ENCODE measurements at regions of chr1 and their contacts with region 1.

Region 1: GRCh38 chr1:155167166-155168104 is 5.7 kb downstream of the KRTCAP2 start:
- DNase-seq: peak; percentile 92
- H3K4me3 Mint-ChIP-seq: peak overlapping the region; percentile 49
- H3K27ac Mint-ChIP-seq: no peak overlapping the region
- H3K4me1 Mint-ChIP-seq: peaks cover 19% of the 10 kb centered on the region
- H3K27me3 Mint-ChIP-seq: no peaks in the 10 kb centered on the region

Region 2: GRCh38 chr1:154062309-154062708 is 1105.1 kb before region 1 on chr1:
- CTCF ChIA-PET with region 1: no interaction called
- POLR2A ChIA-PET with region 1: no interaction called
- intact Hi-C with region 1: no loop called
- DNase-seq: no peak
- H3K4me3 Mint-ChIP-seq: no peak overlapping the region
- H3K27ac Mint-ChIP-seq: no peak overlapping the region
- H3K4me1 Mint-ChIP-seq: no peaks in the 10 kb centered on the region
- H3K27me3 Mint-ChIP-seq: peaks cover 2% of the 10 kb centered on the region

Region 3: DNA sequence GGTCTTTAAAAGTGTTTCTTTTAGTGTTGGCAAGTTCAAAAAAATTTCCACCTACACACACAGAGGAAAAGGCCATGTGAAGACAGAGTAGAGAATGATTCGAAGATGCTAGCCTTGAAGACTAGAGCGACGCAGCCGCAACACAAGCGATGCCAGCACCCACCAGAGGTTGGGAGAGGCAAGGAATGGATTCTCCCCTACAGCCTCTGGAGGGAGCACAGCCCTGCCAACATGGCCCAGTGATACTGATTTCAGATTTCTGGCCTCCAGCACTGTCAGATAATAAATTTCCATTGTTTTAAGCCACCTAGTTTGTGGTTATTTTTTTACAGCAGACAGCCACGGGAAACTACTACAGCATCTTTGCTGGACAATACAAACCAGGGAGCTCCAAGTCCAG is 552.5 kb before region 1 on chr1:
- CTCF ChIA-PET with region 1: no interaction called
- POLR2A ChIA-PET with region 1: no interaction called
- intact Hi-C with region 1: no loop called
- DNase-seq: no peak
- H3K4me3 Mint-ChIP-seq: no peak overlapping the region
- H3K27ac Mint-ChIP-seq: peak overlapping the region; percentile 42
- H3K4me1 Mint-ChIP-seq: peaks cover 45% of the 10 kb centered on the region
- H3K27me3 Mint-ChIP-seq: no peaks in the 10 kb centered on the region

Region 4: DNA sequence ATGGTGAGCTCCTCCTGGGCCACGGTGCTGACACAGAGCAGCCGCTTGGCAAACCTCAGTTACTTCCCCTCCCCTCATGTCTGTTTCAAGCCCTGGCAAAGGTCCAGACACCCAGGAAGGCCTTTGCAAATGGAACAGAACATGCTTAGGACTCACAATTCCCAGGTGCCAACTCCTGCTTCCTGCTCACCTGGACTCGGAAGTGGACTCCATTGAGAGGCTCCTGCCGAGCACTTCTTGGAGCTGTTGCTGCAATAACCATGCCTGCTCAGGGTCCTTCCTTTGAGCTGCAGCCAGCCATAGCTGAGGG is 144.6 kb before region 1 on chr1:
- CTCF ChIA-PET with region 1: no interaction called
- POLR2A ChIA-PET with region 1: no interaction called
- intact Hi-C with region 1: no loop called
- DNase-seq: no peak
- H3K4me3 Mint-ChIP-seq: no peak overlapping the region
- H3K27ac Mint-ChIP-seq: no peak overlapping the region
- H3K4me1 Mint-ChIP-seq: peaks cover 21% of the 10 kb centered on the region
- H3K27me3 Mint-ChIP-seq: no peaks in the 10 kb centered on the region

Region 5: GRCh38 chr1:155044812-155045690 is 122.4 kb before region 1 on chr1:
- CTCF ChIA-PET with region 1: interaction called, 19 read pairs
- POLR2A ChIA-PET with region 1: no interaction called
- intact Hi-C with region 1: no loop called
- DNase-seq: peak; percentile 76
- H3K4me3 Mint-ChIP-seq: no peak overlapping the region
- H3K27ac Mint-ChIP-seq: no peak overlapping the region
- H3K4me1 Mint-ChIP-seq: peaks cover 8% of the 10 kb centered on the region
- H3K27me3 Mint-ChIP-seq: no peaks in the 10 kb centered on the region

Region 6: GRCh38 chr1:155127105-155127964 is 40.1 kb before region 1 on chr1 and contains the start of gene EFNA1:
- CTCF ChIA-PET with region 1: interaction called, 9 read pairs
- POLR2A ChIA-PET with region 1: no interaction called
- intact Hi-C with region 1: loop called (anchors 2 kb)
- DNase-seq: peak; percentile 45
- H3K4me3 Mint-ChIP-seq: peak within 1 kb of the TSS; percentile 64
- H3K27ac Mint-ChIP-seq: no peak within 1 kb of the TSS
- H3K4me1 Mint-ChIP-seq: peaks cover 30% of the 10 kb centered on the region
- H3K27me3 Mint-ChIP-seq: peaks cover 25% of the 10 kb centered on the region
- total RNA-seq, gene EFNA1: 0.24 TPM in 1 of 2 experiments, not detected in the other

Region 7: DNA sequence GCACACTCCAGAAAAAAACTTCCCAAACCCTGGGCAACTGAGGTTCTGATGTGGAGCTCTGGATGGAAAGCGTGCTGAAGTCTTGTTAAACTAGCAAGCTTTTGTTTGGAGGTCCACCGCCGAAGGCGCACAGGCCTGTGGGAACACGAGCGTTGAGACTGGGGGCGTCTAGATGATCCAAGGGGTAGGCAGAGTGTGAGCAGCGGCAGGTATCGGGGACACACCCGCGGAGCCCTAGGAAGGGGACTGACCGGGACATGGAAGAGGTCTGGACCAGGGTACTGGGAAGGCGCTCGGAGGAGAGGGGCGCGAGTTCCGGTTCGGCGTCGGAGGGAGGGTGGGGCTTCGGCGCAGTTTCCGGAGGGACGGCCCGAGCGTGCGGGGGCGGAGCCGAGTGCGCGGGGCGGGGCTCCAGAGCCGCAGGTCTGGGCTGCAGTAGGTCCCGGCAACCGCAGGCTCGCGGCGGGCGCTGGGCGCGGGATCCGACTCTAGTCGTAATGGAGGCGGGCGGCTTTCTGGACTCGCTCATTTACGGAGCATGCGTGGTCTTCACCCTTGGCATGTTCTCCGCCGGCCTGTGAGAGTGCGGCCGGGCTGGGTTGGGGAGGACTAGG is 31.9 kb before region 1 on chr1 and contains the start of gene SLC50A1:
- CTCF ChIA-PET with region 1: interaction called, 21 read pairs
- POLR2A ChIA-PET with region 1: no interaction called
- intact Hi-C with region 1: no loop called
- DNase-seq: peak; percentile 96
- H3K4me3 Mint-ChIP-seq: peak within 1 kb of the TSS; percentile 91
- H3K27ac Mint-ChIP-seq: peak within 1 kb of the TSS; percentile 94
- H3K4me1 Mint-ChIP-seq: peaks cover 35% of the 10 kb centered on the region
- H3K27me3 Mint-ChIP-seq: no peaks in the 10 kb centered on the region
- total RNA-seq, gene SLC50A1: 60.1 TPM

Region 8: GRCh38 chr1:155145491-155145890 is 21.9 kb before region 1 on chr1:
- CTCF ChIA-PET with region 1: interaction called, 10 read pairs
- POLR2A ChIA-PET with region 1: no interaction called
- intact Hi-C with region 1: no loop called
- DNase-seq: no peak
- H3K4me3 Mint-ChIP-seq: no peak overlapping the region
- H3K27ac Mint-ChIP-seq: no peak overlapping the region
- H3K4me1 Mint-ChIP-seq: peaks cover 2% of the 10 kb centered on the region
- H3K27me3 Mint-ChIP-seq: peaks cover 21% of the 10 kb centered on the region

Region 9: GRCh38 chr1:155548706-155549105 is 381.3 kb after region 1 on chr1:
- CTCF ChIA-PET with region 1: no interaction called
- POLR2A ChIA-PET with region 1: no interaction called
- intact Hi-C with region 1: no loop called
- DNase-seq: no peak
- H3K4me3 Mint-ChIP-seq: no peak overlapping the region
- H3K27ac Mint-ChIP-seq: no peak overlapping the region
- H3K4me1 Mint-ChIP-seq: peaks cover 48% of the 10 kb centered on the region
- H3K27me3 Mint-ChIP-seq: no peaks in the 10 kb centered on the region